CD8-positive, alpha-beta T cell (primary cell): ENCODE measurements at regions of chr1 and their contacts with region 1.

Region 1: DNA sequence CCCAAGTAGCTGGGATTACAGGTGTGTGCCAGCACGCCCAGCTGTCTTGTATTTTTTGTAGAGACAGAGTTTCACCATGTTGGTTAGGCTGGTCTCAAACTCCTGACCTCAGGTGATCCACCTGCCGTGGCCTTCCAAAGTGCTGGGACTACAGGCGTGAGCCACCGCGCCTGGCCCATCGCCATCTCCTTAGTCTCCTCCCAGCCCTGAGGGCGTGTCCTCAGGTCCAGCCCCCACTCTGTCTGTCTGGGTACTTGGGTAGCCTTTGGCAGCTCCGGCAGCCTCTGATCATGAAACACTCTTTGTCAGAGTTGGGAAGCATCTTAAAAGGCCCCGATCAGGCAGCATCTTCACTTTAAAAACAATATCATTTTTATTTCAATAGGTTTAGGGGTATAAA is 90.3 kb upstream of the DISP3 start:
- DNase-seq: no peak
- ATAC-seq: no peak
- H3K4me3 ChIP-seq: no peak overlapping the region
- H3K4me3 Mint-ChIP-seq: no peak overlapping the region
- H3K27ac ChIP-seq: no peak overlapping the region
- H3K27ac Mint-ChIP-seq: no peak overlapping the region
- H3K4me1 ChIP-seq: peaks cover 10% of the 10 kb centered on the region
- H3K4me1 Mint-ChIP-seq: peaks cover 13% of the 10 kb centered on the region
- H3K27me3 ChIP-seq: no peaks in the 10 kb centered on the region
- H3K27me3 Mint-ChIP-seq: peaks cover 2% of the 10 kb centered on the region
- CTCF ChIP-seq: no peak

Region 2: GRCh38 chr1:11453742-11454491 is 65.3 kb after region 1 on chr1:
- CTCF ChIA-PET with region 1: no interaction called
- POLR2A ChIA-PET with region 1: no interaction called
- intact Hi-C with region 1: loop called in 1 of 2 experiments (anchors 5 kb)
- DNase-seq: no peak
- ATAC-seq: no peak
- H3K4me3 ChIP-seq: no peak overlapping the region
- H3K4me3 Mint-ChIP-seq: no peak overlapping the region
- H3K27ac ChIP-seq: no peak overlapping the region
- H3K27ac Mint-ChIP-seq: no peak overlapping the region
- H3K4me1 ChIP-seq: peaks cover 13% of the 10 kb centered on the region
- H3K4me1 Mint-ChIP-seq: peaks cover 17% of the 10 kb centered on the region
- H3K27me3 ChIP-seq: no peaks in the 10 kb centered on the region
- H3K27me3 Mint-ChIP-seq: no peaks in the 10 kb centered on the region
- CTCF ChIP-seq: no peak